ENCODE measurements at regions of chr11 and their contacts with region 1.

Region 1: GRCh38 chr11:57792060-57792541 is 30.5 kb downstream of the CTNND1 start:
- DNase-seq: peak; percentile 76 to 97 (median 84)
- ATAC-seq: peak; percentile 94
- H3K4me3 ChIP-seq: peak overlapping the region; percentile 21
- H3K4me3 Mint-ChIP-seq: peak overlapping the region; percentile 80
- H3K27ac ChIP-seq: peak overlapping the region; percentile 79 to 83
- H3K27ac Mint-ChIP-seq: peak overlapping the region; percentile 95
- H3K4me1 ChIP-seq: peaks cover 31% of the 10 kb centered on the region
- H3K4me1 Mint-ChIP-seq: peaks cover 34% of the 10 kb centered on the region
- H3K27me3 ChIP-seq: no peaks in the 10 kb centered on the region
- H3K27me3 Mint-ChIP-seq: no peaks in the 10 kb centered on the region
- CTCF ChIP-seq: no peak

Region 2: GRCh38 chr11:57641011-57641807 is 150.9 kb before region 1 on chr11:
- CTCF ChIA-PET with region 1: no interaction called
- POLR2A ChIA-PET with region 1: no interaction called
- intact Hi-C with region 1: no loop called
- DNase-seq: peak in 4 of 14 experiments; percentile 38 to 71 (median 58)
- ATAC-seq: peak; percentile 42
- H3K4me3 ChIP-seq: no peak overlapping the region
- H3K4me3 Mint-ChIP-seq: peak overlapping the region; percentile 64
- H3K27ac ChIP-seq: no peak overlapping the region
- H3K27ac Mint-ChIP-seq: no peak overlapping the region
- H3K4me1 ChIP-seq: peaks cover 32% of the 10 kb centered on the region
- H3K4me1 Mint-ChIP-seq: peaks cover 28% of the 10 kb centered on the region
- H3K27me3 ChIP-seq: peaks cover 22 to 38% of the 10 kb centered on the region in 2 experiments
- H3K27me3 Mint-ChIP-seq: peaks cover 53% of the 10 kb centered on the region
- CTCF ChIP-seq: peak; percentile 45

Region 3: GRCh38 chr11:57741132-57742086 is 50.7 kb before region 1 on chr11 and contains the start of gene SELENOH:
- CTCF ChIA-PET with region 1: no interaction called
- POLR2A ChIA-PET with region 1: interaction called, 13 read pairs
- intact Hi-C with region 1: loop called in 1 of 2 experiments (anchors 2 kb)
- DNase-seq: peak; percentile 82 to 97 (median 90)
- ATAC-seq: peak; percentile 89
- H3K4me3 ChIP-seq: peak within 1 kb of the TSS; percentile 92
- H3K4me3 Mint-ChIP-seq: peak within 1 kb of the TSS; percentile 97
- H3K27ac ChIP-seq: peak within 1 kb of the TSS; percentile 91 to 96
- H3K27ac Mint-ChIP-seq: peak within 1 kb of the TSS; percentile 95
- H3K4me1 ChIP-seq: peaks cover 31% of the 10 kb centered on the region
- H3K4me1 Mint-ChIP-seq: peaks cover 38% of the 10 kb centered on the region
- H3K27me3 ChIP-seq: no peaks in the 10 kb centered on the region
- H3K27me3 Mint-ChIP-seq: no peaks in the 10 kb centered on the region
- CTCF ChIP-seq: no peak
- total RNA-seq, gene SELENOH: 48.0 to 48.5 TPM

Region 4: DNA sequence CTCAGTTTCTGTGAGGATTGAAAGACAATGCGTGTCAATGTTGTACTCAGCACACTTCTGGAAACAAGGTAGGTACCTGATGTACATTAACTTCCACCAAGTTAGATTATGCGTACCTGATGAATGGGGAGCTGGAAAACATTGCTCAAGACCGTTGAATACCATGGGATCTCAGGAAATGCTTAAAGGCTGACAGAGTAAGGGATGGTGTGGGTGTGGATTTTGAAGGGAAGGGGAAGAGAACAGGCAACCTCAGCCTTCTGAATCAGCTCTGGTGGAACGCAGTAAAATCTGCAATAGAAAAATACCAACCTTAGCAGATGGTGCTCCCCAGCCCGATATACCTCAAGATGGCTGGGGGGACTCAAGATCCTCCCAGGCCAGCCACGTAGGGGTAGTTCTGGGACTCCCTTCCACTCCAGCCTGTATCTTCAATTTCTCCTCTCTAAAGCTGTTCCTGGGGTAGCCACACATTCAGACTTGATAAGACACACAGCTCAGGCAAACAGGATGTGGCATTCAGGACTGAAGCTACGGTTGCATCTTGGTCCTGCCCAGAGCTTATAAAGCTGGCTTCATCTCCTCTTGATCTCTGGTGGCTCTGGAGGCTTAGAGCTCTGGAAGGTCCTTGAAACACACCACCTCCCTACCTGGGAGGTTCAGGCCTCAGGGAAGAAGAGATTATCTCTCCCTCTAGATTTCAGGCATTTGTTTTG is 81.3 kb after region 1 on chr11:
- CTCF ChIA-PET with region 1: no interaction called
- POLR2A ChIA-PET with region 1: no interaction called
- intact Hi-C with region 1: no loop called
- DNase-seq: no peak
- ATAC-seq: no peak
- H3K4me3 ChIP-seq: no peak overlapping the region
- H3K4me3 Mint-ChIP-seq: no peak overlapping the region
- H3K27ac ChIP-seq: no peak overlapping the region
- H3K27ac Mint-ChIP-seq: no peak overlapping the region
- H3K4me1 ChIP-seq: no peaks in the 10 kb centered on the region
- H3K4me1 Mint-ChIP-seq: no peaks in the 10 kb centered on the region
- H3K27me3 ChIP-seq: no peaks in the 10 kb centered on the region
- H3K27me3 Mint-ChIP-seq: peaks cover 16% of the 10 kb centered on the region
- CTCF ChIP-seq: no peak